ENCODE measurements at regions of chr1 and their contacts with region 1.

Region 1: DNA sequence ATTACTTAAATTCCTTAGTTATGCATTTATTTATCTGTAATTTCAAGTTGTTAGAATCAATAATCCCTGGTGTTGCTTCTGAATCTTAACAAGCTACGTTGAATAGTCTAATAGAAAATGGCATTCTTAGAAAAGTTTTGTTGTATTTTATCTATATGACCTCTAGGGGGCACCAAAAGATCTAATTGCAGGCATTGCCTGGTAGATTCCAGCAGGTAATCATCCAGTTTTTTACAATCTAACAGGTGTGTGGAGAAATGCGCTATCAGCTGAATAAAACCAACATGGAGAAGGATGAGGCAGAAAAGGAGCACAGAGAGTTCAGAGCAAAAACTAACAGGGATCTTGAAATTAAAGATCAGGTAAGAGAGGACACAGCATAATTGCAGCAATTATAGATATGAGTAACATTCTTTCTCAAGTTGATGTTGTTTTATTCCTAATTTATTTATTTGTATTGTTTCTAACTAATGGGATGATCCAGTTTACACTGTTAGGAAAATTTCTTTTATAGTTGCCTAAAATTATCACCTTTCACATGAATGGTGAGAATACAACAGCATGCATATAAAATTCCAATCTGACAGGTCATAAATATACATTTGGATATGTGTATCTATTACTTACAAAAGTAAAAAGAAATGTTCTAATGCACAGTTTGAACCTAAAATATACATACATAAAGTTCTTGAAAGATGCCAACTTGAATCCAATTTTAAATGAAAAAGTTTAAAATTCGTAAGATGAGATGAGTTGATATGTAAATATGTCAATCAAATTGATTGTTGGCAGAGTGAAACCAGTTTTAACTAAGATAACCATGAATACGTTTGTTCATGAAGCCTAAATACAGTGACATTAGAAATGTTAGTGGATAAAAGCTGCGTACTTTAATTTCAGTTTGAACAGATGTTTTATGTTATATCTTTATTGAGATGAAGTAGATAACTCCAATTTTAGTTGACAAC is 88.4 kb downstream of the SDCCAG8 start:
- DNase-seq: peak; percentile 8
- ATAC-seq: peak; percentile 59
- H3K4me3 ChIP-seq: no peak overlapping the region
- H3K27ac ChIP-seq: no peak overlapping the region
- H3K4me1 ChIP-seq: no peaks in the 10 kb centered on the region
- H3K27me3 ChIP-seq: no peaks in the 10 kb centered on the region
- CTCF ChIP-seq: peak; percentile 47 to 79 (median 75); a peak in 5 of 6 replicates
- POLR2A ChIP-seq: no peak
- RAD21 ChIP-seq: peak; percentile 78

Region 2: GRCh38 chr1:243409284-243409683 is 65.0 kb after region 1 on chr1:
- CTCF ChIA-PET with region 1: interaction called, 18 read pairs
- POLR2A ChIA-PET with region 1: no interaction called
- RAD21 ChIA-PET with region 1: no interaction called
- intact Hi-C with region 1: no loop called
- DNase-seq: no peak
- ATAC-seq: no peak
- H3K4me3 ChIP-seq: no peak overlapping the region
- H3K27ac ChIP-seq: no peak overlapping the region
- H3K4me1 ChIP-seq: no peaks in the 10 kb centered on the region
- H3K27me3 ChIP-seq: no peaks in the 10 kb centered on the region
- CTCF ChIP-seq: peak in 1 of 3 experiments; percentile 20; a peak in 1 of 6 replicates
- POLR2A ChIP-seq: no peak
- RAD21 ChIP-seq: peak; percentile 41; the same call in 1 of the 2 replicates

Region 3: DNA sequence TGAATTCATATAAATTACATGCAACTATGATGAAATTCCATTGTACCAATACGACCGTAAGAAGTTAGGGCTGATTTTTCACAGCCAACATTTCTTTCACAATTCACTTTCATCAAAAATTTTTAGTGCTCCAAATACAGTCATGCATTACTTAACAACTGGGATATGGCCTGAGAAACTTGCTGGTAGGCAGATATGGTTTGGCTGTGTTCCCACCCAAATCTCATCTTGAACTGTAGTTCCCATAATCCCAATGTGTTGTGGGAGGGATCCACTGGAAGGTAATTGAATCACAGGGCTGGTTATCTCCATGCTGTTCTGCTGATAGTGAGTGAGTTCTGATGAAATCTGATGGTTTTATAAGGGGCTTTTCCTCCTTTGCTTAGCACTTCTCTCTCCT is 261.4 kb after region 1 on chr1:
- CTCF ChIA-PET with region 1: no interaction called
- POLR2A ChIA-PET with region 1: no interaction called
- RAD21 ChIA-PET with region 1: no interaction called
- intact Hi-C with region 1: no loop called
- DNase-seq: no peak
- ATAC-seq: no peak
- H3K4me3 ChIP-seq: no peak overlapping the region
- H3K27ac ChIP-seq: no peak overlapping the region
- H3K4me1 ChIP-seq: no peaks in the 10 kb centered on the region
- H3K27me3 ChIP-seq: no peaks in the 10 kb centered on the region
- CTCF ChIP-seq: no peak
- POLR2A ChIP-seq: no peak
- RAD21 ChIP-seq: no peak

Region 4: GRCh38 chr1:243628476-243628907 is 284.2 kb after region 1 on chr1:
- CTCF ChIA-PET with region 1: no interaction called
- POLR2A ChIA-PET with region 1: no interaction called
- RAD21 ChIA-PET with region 1: no interaction called
- intact Hi-C with region 1: no loop called
- DNase-seq: no peak
- ATAC-seq: no peak
- H3K4me3 ChIP-seq: no peak overlapping the region
- H3K27ac ChIP-seq: no peak overlapping the region
- H3K4me1 ChIP-seq: no peaks in the 10 kb centered on the region
- H3K27me3 ChIP-seq: 0 out of 2 replicates have a peak, but pooled peaks cover 8% of the 10 kb centered on the region
- CTCF ChIP-seq: no peak
- POLR2A ChIP-seq: no peak
- RAD21 ChIP-seq: no peak

Region 5: DNA sequence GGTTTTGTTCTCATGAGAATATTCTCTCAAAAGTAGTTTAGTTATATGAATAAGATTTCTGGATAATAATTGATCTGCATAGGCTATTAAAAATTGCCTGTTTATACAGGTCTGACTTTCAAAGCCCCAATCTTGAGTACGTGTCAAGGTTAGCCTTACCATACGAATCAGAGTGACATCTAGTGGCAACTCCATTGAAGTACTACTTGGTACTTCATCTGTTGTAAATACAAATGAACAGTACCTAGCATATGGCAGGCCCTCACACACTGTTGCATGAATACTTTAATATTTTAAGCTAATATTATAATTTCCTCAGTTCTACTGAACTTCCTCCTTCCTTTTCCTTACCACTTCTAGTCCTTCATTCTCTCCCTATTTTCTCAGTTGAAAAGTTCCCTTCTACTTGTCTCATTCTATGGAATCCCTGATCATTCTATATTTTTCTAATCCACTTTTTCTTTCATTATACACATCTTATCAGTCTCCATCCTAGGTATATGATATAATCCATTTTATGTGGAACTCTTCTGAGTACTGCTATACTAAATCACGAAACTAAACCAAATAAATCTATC is 404.5 kb after region 1 on chr1:
- CTCF ChIA-PET with region 1: no interaction called
- POLR2A ChIA-PET with region 1: no interaction called
- RAD21 ChIA-PET with region 1: interaction called in 1 of 2 experiments, 3 read pairs
- intact Hi-C with region 1: loop called (anchors 1 kb)
- DNase-seq: peak; percentile 63
- ATAC-seq: peak; percentile 99
- H3K4me3 ChIP-seq: no peak overlapping the region
- H3K27ac ChIP-seq: no peak overlapping the region
- H3K4me1 ChIP-seq: no peaks in the 10 kb centered on the region
- H3K27me3 ChIP-seq: 0 out of 2 replicates have a peak, but pooled peaks cover 17% of the 10 kb centered on the region
- CTCF ChIP-seq: peak; percentile 54 to 69 (median 63); a peak in 5 of 6 replicates
- POLR2A ChIP-seq: no peak
- RAD21 ChIP-seq: peak; percentile 68

Region 6: GRCh38 chr1:244047621-244048471 is 703.6 kb after region 1 on chr1:
- CTCF ChIA-PET with region 1: no interaction called
- POLR2A ChIA-PET with region 1: no interaction called
- RAD21 ChIA-PET with region 1: no interaction called
- intact Hi-C with region 1: loop called (anchors 10 kb)
- DNase-seq: peak; percentile 94
- ATAC-seq: peak; percentile 96
- H3K4me3 ChIP-seq: peak overlapping the region; percentile 60 to 70
- H3K27ac ChIP-seq: no peak overlapping the region
- H3K4me1 ChIP-seq: peaks cover 8 to 14% of the 10 kb centered on the region in 2 experiments; a peak in 3 of 4 replicates
- H3K27me3 ChIP-seq: peaks cover 76% of the 10 kb centered on the region
- CTCF ChIP-seq: no peak
- POLR2A ChIP-seq: no peak
- RAD21 ChIP-seq: no peak

Region 7: GRCh38 chr1:244214009-244214967 is 870.0 kb after region 1 on chr1:
- CTCF ChIA-PET with region 1: no interaction called
- POLR2A ChIA-PET with region 1: no interaction called
- RAD21 ChIA-PET with region 1: no interaction called
- intact Hi-C with region 1: loop called (anchors 5 kb)
- DNase-seq: peak; percentile 79
- ATAC-seq: peak; percentile 82
- H3K4me3 ChIP-seq: peak overlapping the region in 1 of 2 experiments; percentile 27; a peak in 2 of 4 replicates
- H3K27ac ChIP-seq: peak overlapping the region; percentile 48
- H3K4me1 ChIP-seq: peaks cover 11 to 24% of the 10 kb centered on the region in 2 experiments
- H3K27me3 ChIP-seq: no peaks in the 10 kb centered on the region
- CTCF ChIP-seq: no peak
- POLR2A ChIP-seq: no peak
- RAD21 ChIP-seq: peak; percentile 8; the same call in 1 of the 2 replicates